GM18951 (cell line): ENCODE measurements at regions of chr10 and their contacts with region 1.

Region 1: DNA sequence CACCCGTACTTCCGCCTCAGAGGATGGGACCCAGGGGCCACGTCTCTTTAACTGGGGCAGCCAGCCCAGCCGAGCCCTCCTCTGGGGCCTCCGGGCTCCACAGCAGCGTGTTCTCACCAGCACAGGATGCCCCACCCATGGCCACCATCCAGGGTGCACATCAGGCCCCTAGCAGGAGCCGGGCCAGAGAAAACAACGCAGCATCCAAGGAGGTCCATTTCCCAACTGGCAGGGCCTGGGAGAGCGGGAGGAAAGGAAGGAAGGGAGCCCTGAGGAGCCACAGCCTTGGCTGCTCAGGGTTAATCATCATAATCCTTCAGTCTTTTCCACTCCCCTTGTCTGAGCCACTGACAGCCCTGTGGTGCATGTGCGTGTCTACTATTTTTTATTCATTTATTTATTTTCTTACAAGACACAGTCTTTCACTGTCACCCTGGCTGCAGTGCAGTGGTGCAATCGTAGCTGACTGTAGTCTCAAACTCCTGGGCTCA is 3.6 kb downstream of the PLAC9 start:
- POLR2A ChIP-seq: no peak

Region 2: DNA sequence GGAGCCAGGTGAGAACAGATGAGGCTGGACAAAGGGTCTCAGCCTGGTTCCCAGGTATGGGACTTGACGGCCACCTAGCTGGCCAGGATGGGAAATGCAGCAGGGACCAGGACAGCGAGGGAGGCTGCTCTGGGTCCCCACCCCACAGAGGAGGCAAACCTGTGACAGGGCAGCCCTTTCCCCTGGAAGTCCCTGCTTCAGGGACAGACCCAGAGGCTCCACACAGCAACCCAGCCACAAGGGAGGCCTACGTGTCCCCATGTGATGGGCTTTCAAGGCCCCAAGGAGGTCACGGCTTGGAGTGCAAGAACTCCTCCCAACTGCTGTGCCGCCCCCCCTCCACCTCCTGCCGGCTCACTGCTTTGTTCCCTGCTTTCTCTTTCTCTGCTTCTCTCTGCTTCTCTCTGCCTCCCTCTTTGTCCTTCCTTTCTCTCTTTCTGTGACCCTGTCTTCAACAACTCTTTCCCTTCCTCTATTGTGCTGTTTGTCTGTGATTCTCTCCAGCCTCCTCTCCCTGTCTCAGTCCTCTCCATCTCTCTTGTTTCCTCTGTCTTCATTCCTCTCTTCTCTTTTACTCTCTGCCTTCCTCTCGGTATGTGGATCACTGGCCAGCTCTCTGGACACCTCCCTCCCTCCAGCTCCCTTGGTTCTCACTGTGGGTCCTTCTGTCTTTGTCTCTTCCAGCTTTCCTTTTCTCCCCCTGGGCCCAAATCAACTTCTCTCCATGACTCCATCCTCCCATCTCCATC is 633.4 kb before region 1 on chr10:
- in situ Hi-C with region 1: loop called (anchors 10 kb)
- POLR2A ChIP-seq: no peak